ENCODE measurements at regions of chr7 and their contacts with region 1.

Region 1: DNA sequence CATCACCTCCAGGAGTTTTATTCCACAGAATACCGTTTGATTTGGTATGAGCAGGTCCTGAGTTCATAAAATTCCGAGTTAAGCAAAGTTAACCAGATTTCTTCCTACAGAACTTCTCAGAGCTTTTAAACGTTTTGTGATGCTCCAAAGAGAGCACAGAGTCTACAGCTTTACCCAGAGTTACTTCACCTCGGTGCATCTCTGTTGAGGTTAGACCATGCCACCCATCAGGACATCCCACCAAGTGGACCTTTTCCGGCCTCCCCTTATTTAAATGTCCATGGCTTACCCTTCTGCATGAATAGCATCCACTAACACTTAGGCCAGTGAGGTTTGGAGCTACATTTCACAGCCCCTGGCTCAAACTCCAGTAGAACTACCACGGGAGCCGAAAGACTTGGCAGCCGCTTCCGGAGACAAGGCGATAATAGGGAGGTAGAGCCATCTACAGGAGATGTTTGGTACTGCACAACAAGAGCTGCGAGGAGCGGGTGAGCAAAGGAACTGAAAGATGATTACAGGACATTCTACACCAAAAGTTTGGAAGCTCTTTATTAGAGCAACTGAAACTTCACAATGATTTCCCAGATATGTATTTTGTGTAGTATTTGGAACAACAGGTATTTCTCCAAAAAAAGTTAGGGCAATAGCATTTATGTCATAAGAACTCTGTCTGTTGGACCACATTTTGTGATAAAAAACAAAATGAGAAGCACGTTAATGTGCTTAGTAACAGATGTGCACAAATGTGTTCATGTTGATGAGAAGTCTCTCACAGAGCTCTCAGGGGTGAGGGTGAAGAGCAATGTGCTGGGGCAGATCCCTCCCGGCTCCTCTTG is 174.7 kb downstream of the HERPUD2 start:
- DNase-seq: peak; percentile 84
- H3K4me3 ChIP-seq: no peak overlapping the region; a peak in 1 of 4 replicates
- H3K27ac ChIP-seq: no peak overlapping the region
- H3K4me1 ChIP-seq: peaks cover 0 to 19% of the 10 kb centered on the region in 2 experiments; a peak in 2 of 4 replicates
- H3K27me3 ChIP-seq: peaks cover 10% of the 10 kb centered on the region; the same call in 1 of the 2 replicates
- CTCF ChIP-seq: peak; percentile 95
- EP300 ChIP-seq: no peak
- RAD21 ChIP-seq: peak; percentile 99

Region 2: DNA sequence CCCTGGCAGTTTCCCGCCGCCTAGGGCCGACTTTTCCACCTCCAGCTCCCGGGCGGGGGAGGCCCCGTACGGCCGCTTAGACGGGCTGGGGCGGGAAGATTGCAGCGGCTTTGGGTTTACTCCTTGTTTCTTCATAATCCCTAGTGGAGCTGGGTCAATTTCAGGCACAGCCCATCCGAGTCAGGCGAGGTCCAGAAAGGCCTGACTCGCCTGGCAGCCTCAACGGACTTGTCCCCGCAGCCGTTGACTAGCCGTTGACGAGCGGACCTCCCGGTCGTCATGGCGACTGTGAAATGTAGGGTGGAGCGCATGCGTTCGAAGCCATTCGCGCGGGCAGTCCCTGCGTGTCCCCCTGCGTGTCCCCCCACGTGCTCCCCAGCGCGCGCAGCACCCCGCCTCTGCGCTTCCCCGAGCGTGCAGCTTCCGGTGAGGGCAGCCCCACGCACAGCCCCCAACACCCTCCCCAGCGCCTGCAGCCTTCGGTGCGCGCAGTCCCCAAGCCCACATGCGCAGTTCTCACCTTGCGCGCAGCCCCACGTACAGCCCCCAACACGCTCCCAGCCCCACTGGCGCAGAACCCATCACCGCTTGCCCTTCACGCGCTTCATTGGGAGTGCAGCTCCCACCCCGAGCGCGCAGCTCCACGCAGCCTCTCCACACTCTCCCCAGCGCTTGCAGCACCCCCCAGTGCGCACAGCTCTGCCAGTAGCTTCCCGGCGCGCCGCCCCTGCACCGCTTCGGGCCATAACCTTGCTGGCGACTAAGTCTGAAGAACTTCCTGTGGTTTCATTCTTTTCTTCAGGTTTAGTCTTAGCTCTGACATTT is 334.1 kb before region 1 on chr7:
- CTCF ChIA-PET with region 1: interaction called, 19 read pairs
- POLR2A ChIA-PET with region 1: no interaction called
- DNase-seq: peak; percentile 73
- H3K4me3 ChIP-seq: peak overlapping the region; percentile 59 to 90
- H3K27ac ChIP-seq: peak overlapping the region; percentile 45 to 47
- H3K4me1 ChIP-seq: peaks cover 0 to 10% of the 10 kb centered on the region in 2 experiments; a peak in 1 of 4 replicates
- H3K27me3 ChIP-seq: no peaks in the 10 kb centered on the region
- CTCF ChIP-seq: 0 out of 2 replicates have a peak, but pooled peaks have one; percentile 57
- EP300 ChIP-seq: peak in 1 of 2 experiments; percentile 3; a peak in 1 of 4 replicates
- RAD21 ChIP-seq: peak; percentile 30; the same call in 1 of the 2 replicates

Region 3: GRCh38 chr7:35374538-35375257 is 145.5 kb before region 1 on chr7:
- CTCF ChIA-PET with region 1: interaction called, 15 read pairs
- POLR2A ChIA-PET with region 1: no interaction called
- DNase-seq: no peak
- H3K4me3 ChIP-seq: no peak overlapping the region
- H3K27ac ChIP-seq: no peak overlapping the region
- H3K4me1 ChIP-seq: peaks cover 0 to 26% of the 10 kb centered on the region in 2 experiments; a peak in 2 of 4 replicates
- H3K27me3 ChIP-seq: peaks cover 6% of the 10 kb centered on the region; the same call in 1 of the 2 replicates
- CTCF ChIP-seq: no peak
- EP300 ChIP-seq: no peak
- RAD21 ChIP-seq: no peak

Region 4: GRCh38 chr7:35401217-35401879 is 118.8 kb before region 1 on chr7:
- CTCF ChIA-PET with region 1: interaction called, 17 read pairs
- POLR2A ChIA-PET with region 1: no interaction called
- DNase-seq: no peak
- H3K4me3 ChIP-seq: no peak overlapping the region
- H3K27ac ChIP-seq: no peak overlapping the region
- H3K4me1 ChIP-seq: no peaks in the 10 kb centered on the region
- H3K27me3 ChIP-seq: no peaks in the 10 kb centered on the region; the same call in 1 of the 2 replicates
- CTCF ChIP-seq: no peak
- EP300 ChIP-seq: no peak
- RAD21 ChIP-seq: no peak

Region 5: DNA sequence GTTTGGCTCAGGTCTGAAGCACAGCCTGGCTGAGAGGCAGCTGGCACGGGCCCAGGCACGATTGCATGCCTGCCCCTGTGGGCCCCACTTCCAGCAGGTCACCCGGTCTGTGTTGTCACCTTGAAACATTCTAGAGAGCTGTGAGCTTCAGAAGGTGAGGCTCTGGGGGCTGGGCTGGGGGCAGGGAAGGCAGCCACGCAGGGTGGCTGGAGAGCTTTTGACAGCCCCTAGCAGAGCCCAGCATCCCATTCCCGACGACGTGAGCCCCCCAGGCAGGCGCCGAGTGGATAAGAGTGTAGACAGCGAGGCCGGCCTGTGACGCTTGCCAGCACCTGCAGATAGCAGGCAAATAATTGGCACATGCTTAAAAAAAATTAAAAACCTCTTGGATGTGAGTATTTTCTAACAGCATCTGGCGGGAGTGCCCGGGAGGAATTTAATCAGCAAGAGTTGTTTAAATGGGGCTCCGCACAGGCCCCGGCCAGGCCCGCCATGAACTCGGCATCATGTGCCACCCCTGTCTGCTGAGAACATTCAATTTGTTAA is 54.3 kb before region 1 on chr7:
- CTCF ChIA-PET with region 1: interaction called, 13 read pairs
- POLR2A ChIA-PET with region 1: interaction called, 5 read pairs
- DNase-seq: peak; percentile 86
- H3K4me3 ChIP-seq: peak overlapping the region in 1 of 2 experiments; percentile 14; a peak in 1 of 4 replicates
- H3K27ac ChIP-seq: peak overlapping the region in 1 of 2 experiments; percentile 99; a peak in 2 of 4 replicates
- H3K4me1 ChIP-seq: peaks cover 0 to 35% of the 10 kb centered on the region in 2 experiments; a peak in 2 of 4 replicates
- H3K27me3 ChIP-seq: no peaks in the 10 kb centered on the region
- CTCF ChIP-seq: no peak
- EP300 ChIP-seq: peak in 1 of 2 experiments; percentile 86; a peak in 2 of 4 replicates
- RAD21 ChIP-seq: 0 out of 2 replicates have a peak, but pooled peaks have one; percentile 4

Region 6: DNA sequence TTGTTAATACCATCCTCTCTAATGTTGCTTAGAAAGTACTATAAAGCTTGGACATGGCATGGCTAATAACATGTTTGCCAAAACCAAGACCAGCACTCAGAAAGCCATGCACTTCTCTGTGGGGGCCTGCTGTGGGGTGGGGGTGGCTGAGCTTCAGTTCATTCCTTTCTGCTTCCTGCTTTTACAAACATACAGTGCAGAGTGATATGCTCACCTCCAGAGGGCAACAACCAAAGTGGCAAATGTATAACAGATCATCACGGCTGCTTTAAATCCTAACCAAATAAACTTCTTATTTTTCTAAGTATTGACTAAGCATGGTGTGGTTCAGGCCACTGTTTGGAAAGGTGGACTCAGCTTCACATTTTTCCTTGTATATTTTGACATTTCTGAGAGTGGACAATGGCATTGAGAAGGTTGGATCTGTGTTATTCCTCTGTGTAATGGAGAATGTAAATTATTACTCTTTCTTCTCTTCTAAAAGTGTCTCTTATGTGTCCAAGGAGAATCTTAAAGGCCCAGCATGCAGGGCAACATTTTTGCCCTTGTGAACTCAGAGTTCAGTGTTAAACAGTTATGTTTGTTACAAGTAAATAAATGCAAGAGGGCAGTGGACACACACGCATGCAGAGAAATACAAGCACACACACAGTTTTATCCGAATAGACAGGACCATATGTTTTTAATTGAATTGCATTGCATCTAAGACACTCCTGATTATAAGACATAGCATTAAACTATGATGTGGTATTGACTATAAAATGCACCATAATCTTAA is 11.4 kb before region 1 on chr7:
- CTCF ChIA-PET with region 1: interaction called, 87 read pairs
- POLR2A ChIA-PET with region 1: no interaction called
- DNase-seq: no peak
- H3K4me3 ChIP-seq: no peak overlapping the region
- H3K27ac ChIP-seq: no peak overlapping the region
- H3K4me1 ChIP-seq: peaks cover 2 to 5% of the 10 kb centered on the region in 2 experiments; a peak in 2 of 4 replicates
- H3K27me3 ChIP-seq: no peaks in the 10 kb centered on the region
- CTCF ChIP-seq: peak; percentile 37
- EP300 ChIP-seq: no peak
- RAD21 ChIP-seq: peak; percentile 28; the same call in 1 of the 2 replicates

Region 7: GRCh38 chr7:35544028-35544742 is 24.0 kb after region 1 on chr7:
- CTCF ChIA-PET with region 1: interaction called, 28 read pairs
- POLR2A ChIA-PET with region 1: no interaction called
- DNase-seq: no peak
- H3K4me3 ChIP-seq: no peak overlapping the region
- H3K27ac ChIP-seq: no peak overlapping the region
- H3K4me1 ChIP-seq: peaks cover 0 to 3% of the 10 kb centered on the region in 2 experiments; a peak in 1 of 4 replicates
- H3K27me3 ChIP-seq: peaks cover 56% of the 10 kb centered on the region; the same call in 1 of the 2 replicates
- CTCF ChIP-seq: no peak
- EP300 ChIP-seq: no peak
- RAD21 ChIP-seq: no peak